Common myeloid progenitor, CD34-positive (primary cell): ENCODE measurements at regions of chr17 and their contacts with region 1.

Region 1: DNA sequence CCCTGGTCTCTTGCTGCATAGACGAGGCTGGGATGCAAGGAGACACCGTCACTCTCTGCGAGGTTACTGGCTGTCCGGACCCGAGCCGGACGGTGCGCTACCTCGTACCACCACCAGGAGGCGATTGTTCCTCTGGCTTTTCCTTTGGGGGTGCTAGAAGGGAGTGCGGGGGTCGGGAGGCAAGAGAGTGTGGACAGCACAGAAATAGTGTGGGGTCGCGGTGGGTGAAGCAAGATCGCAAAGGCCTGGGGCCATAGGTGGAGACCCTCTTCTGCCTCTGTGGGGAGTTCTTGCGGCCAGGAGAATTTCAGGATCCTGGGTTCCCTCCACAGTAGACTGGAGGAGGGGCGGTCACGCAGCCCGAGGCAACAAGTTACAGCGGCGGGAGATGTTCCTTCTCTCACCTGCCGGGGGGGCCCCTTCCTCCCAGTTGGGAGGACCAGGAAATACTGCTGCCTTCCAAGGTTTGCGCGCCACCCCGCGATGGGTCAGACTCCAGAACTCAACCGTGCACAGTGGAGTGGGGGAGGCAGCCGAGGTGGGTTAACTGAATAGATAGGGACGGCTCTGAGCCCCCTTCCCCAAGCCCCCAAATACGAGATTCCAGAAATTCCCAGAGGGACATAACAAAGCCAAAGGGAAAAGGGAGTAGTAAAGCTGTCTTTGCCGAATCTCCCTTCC is 6.9 kb downstream of the PHOSPHO1 start:
- DNase-seq: peak in 2 of 3 donors; percentile 50 to 59
- H3K4me3 ChIP-seq: peak overlapping the region in 5 of 7 experiments; percentile 19 to 63 (median 51)
- H3K27ac ChIP-seq: no peak overlapping the region
- H3K4me1 ChIP-seq: peaks cover 0 to 39% (median 31%) of the 10 kb centered on the region in 4 experiments
- H3K27me3 ChIP-seq: peaks cover 0 to 55% (median 12%) of the 10 kb centered on the region in 5 experiments

Region 2: GRCh38 chr17:48791128-48792032 is 432.3 kb before region 1 on chr17:
- CTCF ChIA-PET with region 1: no interaction called
- POLR2A ChIA-PET with region 1: no interaction called
- DNase-seq: peak; percentile 60 to 66 (median 65)
- H3K4me3 ChIP-seq: no peak overlapping the region
- H3K27ac ChIP-seq: no peak overlapping the region
- H3K4me1 ChIP-seq: peaks cover 0 to 11% (median 1%) of the 10 kb centered on the region in 4 experiments
- H3K27me3 ChIP-seq: peaks cover 0 to 68% (median 22%) of the 10 kb centered on the region in 5 experiments

Region 3: DNA sequence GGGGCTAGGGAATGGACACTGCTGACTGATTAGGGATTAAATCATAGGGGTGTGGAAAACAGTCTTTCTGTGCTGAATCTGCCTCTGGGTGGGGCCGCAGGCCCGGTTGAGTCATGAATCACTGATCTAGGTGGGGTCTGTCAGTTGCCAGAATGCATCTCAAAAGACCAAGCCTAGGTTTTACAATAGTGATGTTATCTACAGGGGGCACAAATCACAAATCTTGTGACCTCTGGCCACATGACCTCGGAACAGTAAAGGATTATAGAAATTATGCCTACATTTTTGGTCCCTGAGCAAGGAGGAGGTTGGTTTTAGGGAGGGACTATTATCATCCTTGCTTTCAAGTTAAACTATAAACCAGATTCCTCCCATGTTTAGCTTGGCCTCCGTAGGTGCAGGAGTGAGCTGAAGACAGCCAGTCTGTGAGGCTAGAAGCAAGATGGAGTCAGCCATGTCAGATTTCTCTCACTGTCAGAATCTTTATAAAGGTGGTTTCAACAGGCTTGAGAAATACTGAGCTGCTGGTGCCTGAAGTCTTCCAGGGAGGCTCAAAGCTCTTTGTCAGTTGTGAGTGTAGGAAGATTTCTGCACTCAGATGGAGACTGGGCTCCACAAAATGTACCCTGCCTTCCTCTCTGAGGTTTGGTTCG is 26.2 kb before region 1 on chr17:
- CTCF ChIA-PET with region 1: interaction called, 68 read pairs
- POLR2A ChIA-PET with region 1: interaction called, 14 read pairs
- DNase-seq: no peak
- H3K4me3 ChIP-seq: no peak overlapping the region
- H3K27ac ChIP-seq: no peak overlapping the region
- H3K4me1 ChIP-seq: peaks cover 0 to 18% (median 12%) of the 10 kb centered on the region in 4 experiments
- H3K27me3 ChIP-seq: no peaks in the 10 kb centered on the region